Sigmoid colon (tissue), 7 donors: ENCODE measurements at regions of chr7 and their contacts with region 1.

Region 1: DNA sequence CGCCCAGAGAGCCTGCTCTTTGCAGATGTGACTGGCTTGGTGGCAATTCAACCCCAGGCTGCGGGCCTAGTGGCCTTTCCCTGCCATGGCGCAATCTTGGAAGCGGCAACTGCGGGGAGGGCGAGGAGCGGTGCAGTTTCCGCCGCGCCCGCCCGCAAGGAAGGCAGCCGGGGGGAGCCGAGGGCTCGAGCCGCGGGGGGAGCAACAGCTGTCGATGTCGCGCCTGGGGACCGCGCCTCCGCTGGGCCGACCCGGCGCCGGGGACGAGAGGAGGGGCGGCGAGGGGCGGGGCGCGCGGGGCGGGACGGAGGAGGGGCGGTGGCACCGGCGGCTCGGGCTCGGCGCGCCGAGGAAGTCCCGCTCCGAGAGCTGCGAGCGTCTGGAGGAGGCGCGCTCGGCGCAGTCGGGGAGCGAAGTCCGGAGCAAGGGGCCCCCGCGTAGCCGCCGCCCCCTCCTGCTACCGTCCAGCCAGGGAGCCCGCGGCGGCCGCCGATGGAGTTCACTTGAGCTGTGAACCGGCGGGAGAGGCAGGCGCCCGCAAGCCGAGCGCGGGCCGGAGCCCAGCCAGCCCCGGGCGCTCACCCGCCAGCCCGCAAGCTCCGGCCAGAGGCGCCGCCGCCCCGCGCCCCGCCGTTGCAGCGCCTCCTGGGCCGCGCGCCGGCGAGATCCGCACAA is 438.1 kb upstream of the GALNT17 start:
- DNase-seq: peak; percentile 77
- H3K4me3 ChIP-seq: peak overlapping the region; percentile 47 to 80 (median 68)
- H3K27ac ChIP-seq: peak overlapping the region; percentile 67 to 82 (median 74)
- H3K4me1 ChIP-seq: peaks cover 0 to 25% (median 12%) of the 10 kb centered on the region in 4 donors
- H3K27me3 ChIP-seq: peaks cover 0 to 11% (median 0%) of the 10 kb centered on the region in 3 donors
- CTCF ChIP-seq: peak in 1 of 4 experiments; percentile 14
- EP300 ChIP-seq: no peak
- POLR2A ChIP-seq: no peak

Region 2: DNA sequence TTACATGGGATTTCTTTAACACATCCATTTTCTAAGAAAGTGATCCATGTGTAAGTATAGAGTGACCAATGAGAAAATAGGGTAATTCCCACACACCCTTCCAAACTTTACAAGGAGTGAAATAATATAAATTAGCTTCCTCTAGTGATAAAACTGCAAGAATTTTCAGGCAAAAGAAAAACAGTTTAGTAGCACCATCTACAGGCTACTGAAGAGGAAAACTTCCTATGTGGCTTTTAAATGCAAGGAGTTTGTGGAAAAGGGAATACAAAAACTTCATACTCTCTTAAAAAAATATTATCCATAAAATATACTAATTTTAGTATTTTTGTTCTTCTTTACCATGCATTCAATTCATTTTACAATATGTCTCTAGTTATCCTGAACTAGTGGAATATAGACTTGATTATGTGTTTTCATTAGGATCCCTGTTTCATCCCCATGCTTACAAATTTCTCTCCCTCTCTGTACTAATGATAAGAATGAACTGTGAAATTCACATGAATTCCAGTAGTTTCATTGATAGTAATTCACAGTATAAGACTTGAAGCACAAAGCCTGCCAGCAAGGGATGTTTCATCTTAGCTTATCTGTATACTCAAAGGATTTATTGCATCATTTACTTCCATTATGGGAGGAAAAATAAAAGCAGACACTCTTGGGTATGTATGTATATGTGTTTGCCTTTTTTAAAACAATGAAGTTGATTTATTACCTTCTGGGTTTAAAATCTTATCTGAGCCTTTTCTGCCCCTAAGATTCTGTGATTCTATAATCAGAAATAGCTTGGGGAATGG is 652.7 kb before region 1 on chr7:
- intact Hi-C with region 1: loop called (anchors 5 kb)
- DNase-seq: no peak
- H3K4me3 ChIP-seq: no peak overlapping the region
- H3K27ac ChIP-seq: no peak overlapping the region
- H3K4me1 ChIP-seq: peaks cover 0 to 30% (median 26%) of the 10 kb centered on the region in 4 donors
- H3K27me3 ChIP-seq: no peaks in the 10 kb centered on the region
- CTCF ChIP-seq: peak in 1 of 4 experiments; percentile 33
- EP300 ChIP-seq: no peak
- POLR2A ChIP-seq: no peak

Region 3: GRCh38 chr7:70354409-70355169 is 339.2 kb before region 1 on chr7:
- intact Hi-C with region 1: loop called (anchors 10 kb)
- DNase-seq: no peak
- H3K4me3 ChIP-seq: no peak overlapping the region
- H3K27ac ChIP-seq: no peak overlapping the region
- H3K4me1 ChIP-seq: peaks cover 0 to 47% (median 43%) of the 10 kb centered on the region in 4 donors
- H3K27me3 ChIP-seq: no peaks in the 10 kb centered on the region
- CTCF ChIP-seq: no peak
- EP300 ChIP-seq: no peak
- POLR2A ChIP-seq: no peak